Heart left ventricle (tissue), 16 donors: ENCODE measurements at regions of chr1 and their contacts with region 1.

Region 1: DNA sequence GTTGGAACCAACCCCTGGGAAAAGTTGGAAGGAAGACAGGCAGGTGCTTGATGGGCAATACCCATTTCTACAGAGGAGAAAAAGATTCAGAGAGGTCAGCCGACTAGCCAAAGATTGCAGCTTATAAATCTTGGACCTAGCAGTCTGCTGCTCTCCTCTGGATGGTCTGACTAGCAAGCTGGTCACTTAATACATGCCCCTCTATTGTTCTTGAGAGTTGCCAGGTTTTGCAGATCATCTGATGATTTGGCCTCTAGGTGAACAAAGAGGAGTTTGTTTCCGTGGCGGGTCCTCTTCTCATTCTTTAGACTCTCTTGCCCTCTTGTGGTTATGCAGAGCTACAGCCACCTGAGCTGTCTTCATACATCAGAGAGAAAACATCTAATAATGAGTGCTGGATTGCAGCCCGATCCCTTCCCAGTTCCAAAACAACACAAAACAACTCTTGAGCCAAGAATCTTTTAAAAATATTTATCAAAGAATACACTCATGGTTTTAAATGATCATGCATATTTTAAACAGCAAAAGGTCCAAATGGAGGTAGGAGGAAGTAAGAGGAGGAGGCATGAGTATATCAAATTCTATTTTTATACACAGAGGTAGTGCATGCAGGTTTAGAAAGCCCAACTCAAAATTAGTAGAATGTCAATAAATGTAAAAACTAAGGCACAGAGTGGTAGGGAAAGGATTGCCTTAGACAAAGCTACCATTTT is 115.7 kb downstream of the SLC30A10 start:
- DNase-seq: peak in 2 of 5 donors; percentile 22 to 40
- ATAC-seq: peak in 3 of 4 donors; percentile 78 to 92 (median 82)
- H3K4me3 ChIP-seq: no peak overlapping the region
- H3K27ac ChIP-seq: no peak overlapping the region
- H3K4me1 ChIP-seq: peaks cover 0 to 9% (median 0%) of the 10 kb centered on the region in 12 donors
- H3K27me3 ChIP-seq: peaks cover 0 to 3% (median 0%) of the 10 kb centered on the region in 9 donors
- CTCF ChIP-seq: peak; percentile 57 to 85 (median 82)
- POLR2A ChIP-seq: no peak

Region 2: GRCh38 chr1:219075121-219075879 is 737.3 kb before region 1 on chr1:
- intact Hi-C with region 1: loop called in 1 of 10 experiments (anchors 10 kb)
- DNase-seq: no peak
- ATAC-seq: no peak
- H3K4me3 ChIP-seq: no peak overlapping the region
- H3K27ac ChIP-seq: no peak overlapping the region
- H3K4me1 ChIP-seq: peaks cover 0 to 9% (median 0%) of the 10 kb centered on the region in 12 donors
- H3K27me3 ChIP-seq: no peaks in the 10 kb centered on the region
- CTCF ChIP-seq: no peak
- POLR2A ChIP-seq: no peak

Region 3: DNA sequence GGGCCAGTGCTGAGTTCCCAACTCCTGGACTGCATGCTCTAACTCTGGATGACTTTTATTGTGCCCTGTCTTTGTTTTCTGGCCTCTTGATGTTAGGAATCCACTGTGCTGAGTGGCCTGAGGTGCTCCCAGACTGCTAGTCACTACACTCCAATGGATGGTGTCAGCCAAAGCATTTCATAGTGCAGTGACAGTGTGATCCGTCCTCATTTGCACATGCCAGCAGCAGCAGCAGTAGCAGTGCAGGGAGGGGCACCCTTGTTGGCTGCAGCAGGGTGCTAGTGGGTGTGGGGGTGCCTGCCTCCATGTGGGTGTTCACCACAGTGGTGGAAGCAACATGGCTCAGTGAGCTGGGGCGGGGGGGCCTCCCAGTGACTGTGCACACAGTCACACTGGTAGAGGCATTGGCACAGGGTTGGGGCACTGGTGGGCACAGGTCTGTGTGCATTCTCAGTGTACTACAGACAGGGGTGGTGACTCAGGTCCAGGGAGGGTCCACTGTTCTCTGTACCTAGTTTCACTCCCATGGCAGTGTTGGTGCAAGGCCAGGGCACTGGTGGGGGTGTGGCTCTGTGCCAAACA is 413.7 kb before region 1 on chr1:
- intact Hi-C with region 1: loop called in 1 of 10 experiments (anchors 10 kb)
- DNase-seq: peak in 4 of 5 donors; percentile 34 to 67 (median 47)
- ATAC-seq: peak; percentile 97
- H3K4me3 ChIP-seq: no peak overlapping the region
- H3K27ac ChIP-seq: peak overlapping the region in 8 of 12 donors; percentile 1 to 63 (median 38)
- H3K4me1 ChIP-seq: peaks cover 0 to 17% (median 0%) of the 10 kb centered on the region in 12 donors
- H3K27me3 ChIP-seq: no peaks in the 10 kb centered on the region
- CTCF ChIP-seq: no peak
- POLR2A ChIP-seq: no peak

Region 4: GRCh38 chr1:219576931-219577730 is 235.5 kb before region 1 on chr1:
- intact Hi-C with region 1: loop called in 3 of 10 experiments (anchors 5 to 10 kb)
- DNase-seq: no peak
- ATAC-seq: no peak
- H3K4me3 ChIP-seq: no peak overlapping the region
- H3K27ac ChIP-seq: no peak overlapping the region
- H3K4me1 ChIP-seq: peaks cover 0 to 12% (median 5%) of the 10 kb centered on the region in 12 donors
- H3K27me3 ChIP-seq: no peaks in the 10 kb centered on the region
- CTCF ChIP-seq: no peak
- POLR2A ChIP-seq: no peak